ENCODE measurements at regions of chr19 and their contacts with region 1.

Region 1: DNA sequence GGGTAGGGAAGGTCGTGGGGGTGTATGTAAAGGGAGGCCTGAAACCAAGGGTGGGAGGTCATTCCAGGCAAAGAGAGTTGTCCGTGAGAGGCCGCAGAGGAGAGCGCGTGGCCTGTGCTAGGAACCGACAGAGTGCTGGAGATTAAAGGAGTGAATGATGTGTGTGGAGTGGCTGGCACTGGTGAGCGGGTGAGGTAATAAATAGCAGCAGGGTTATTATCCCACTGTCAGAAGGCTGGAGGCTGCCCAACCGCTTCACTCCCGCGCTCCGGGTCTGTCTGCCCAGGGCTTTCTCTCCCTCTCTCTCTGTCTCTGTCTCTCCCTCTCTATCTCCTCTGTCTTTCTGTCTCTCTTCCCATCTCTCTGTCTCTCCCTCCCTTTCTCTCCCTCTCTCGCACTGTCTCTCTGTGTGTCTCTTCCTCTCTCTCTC is 17.4 kb downstream of the ZNF579 start:
- DNase-seq: no peak
- H3K4me3 ChIP-seq: no peak overlapping the region
- H3K27me3 ChIP-seq: peaks cover 6% of the 10 kb centered on the region; the same call in 1 of the 2 replicates
- CTCF ChIP-seq: no peak

Region 2: DNA sequence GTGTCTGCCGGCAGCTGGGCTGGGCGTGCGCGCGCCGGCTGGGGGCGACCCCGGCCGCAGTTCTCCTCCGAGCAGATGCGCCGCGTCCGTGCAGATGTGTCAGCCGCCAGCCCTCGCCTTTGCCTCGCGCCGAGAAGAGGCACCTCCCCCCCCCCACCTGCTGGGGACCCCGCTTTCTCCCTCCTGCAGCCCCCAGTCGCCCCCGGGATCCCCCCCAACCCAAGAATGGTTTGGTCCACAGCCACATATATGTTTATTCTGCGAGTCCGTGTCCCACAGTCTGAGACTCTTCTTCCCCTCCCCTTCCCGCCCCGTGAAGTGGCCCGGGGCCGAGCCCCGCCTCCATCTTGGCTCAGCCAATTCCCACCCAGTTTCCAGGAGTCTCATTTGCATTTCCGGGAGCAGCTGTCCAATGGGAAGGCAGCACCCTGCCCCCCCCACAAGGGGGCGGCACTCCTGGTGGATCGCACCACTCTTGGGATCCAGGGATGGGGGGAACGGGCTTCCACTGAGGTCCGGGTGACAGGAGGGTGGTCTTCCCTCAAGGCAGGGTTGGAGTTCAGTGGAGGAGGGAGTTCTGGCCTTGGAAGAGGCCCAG is 110.4 kb before region 1 on chr19:
- CTCF ChIA-PET with region 1: no interaction called
- POLR2A ChIA-PET with region 1: no interaction called
- DNase-seq: peak; percentile 25
- H3K4me3 ChIP-seq: no peak overlapping the region
- H3K27me3 ChIP-seq: peaks cover 16% of the 10 kb centered on the region
- CTCF ChIP-seq: 0 out of 2 replicates have a peak, but pooled peaks have one; percentile 27

Region 3: DNA sequence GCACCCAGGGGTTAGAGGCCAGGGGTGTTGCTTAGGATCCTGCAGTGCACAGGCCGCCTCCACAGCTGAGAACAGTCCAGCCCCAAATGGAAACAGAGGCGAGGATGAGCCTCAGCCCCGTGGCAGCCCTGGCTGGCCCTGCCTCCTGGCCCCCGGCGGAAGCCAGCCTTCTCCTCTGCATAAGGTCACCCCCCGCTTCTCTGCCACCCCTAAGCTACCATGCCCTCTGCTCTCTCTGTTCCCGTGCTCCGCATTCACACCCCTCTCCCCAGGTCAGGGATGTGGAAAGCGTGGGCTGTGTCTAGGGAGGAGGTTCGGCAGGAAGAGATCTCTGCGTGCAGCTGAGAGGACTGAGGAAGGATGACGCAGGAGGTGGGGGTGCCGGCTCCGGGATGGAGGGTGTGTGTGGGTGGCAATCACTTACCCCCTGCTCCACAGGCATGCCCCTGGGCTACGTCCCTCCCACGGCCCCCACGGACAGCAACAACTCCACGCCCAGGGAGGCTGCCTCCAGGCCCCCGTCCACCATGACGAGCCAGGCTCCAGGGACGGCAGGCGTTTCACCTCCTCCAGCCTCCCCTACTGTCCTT is 69.0 kb before region 1 on chr19:
- CTCF ChIA-PET with region 1: no interaction called
- POLR2A ChIA-PET with region 1: no interaction called
- DNase-seq: no peak
- H3K4me3 ChIP-seq: peak overlapping the region; percentile 39
- H3K27me3 ChIP-seq: no peaks in the 10 kb centered on the region
- CTCF ChIP-seq: no peak

Region 4: DNA sequence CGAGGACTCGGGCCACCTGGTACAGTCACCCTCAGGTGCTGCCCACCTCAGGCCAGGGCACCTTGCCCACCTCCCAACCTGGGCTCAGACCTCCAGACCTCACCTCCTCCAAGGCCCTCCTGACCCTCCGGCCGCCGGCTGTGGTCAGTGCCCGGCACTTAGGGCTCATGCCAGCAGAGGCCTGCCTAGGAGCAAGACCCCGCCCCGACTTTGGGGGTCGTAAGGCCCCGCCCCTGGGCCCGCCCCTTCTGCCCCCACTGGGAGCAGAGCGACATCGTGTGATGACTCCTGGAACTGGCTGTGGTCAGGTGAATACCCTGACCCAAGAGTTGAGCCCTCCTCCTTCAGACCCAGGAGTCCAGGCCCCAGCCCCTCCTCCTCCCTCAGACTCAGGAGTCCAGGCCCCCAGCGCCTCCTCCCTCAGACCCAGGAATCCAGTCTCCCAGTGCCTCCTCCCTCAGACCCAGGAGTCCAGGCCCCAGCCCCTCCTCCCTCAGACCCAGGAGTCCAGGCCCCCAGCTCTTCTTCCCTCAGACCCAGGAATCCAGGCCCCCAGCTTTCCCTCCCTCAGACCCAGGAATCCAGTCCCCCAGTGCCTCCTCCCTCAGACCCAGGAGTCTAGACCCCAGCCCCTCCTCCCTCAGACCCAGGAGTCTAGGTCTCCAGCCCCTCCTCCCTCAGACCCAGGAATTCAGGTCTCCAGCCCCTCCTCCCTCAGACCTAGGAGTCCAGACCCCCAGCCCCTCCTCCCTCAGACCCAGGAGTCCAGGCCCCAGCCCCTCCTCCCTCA is 26.1 kb before region 1 on chr19 and contains the start of gene SBK2:
- CTCF ChIA-PET with region 1: no interaction called
- POLR2A ChIA-PET with region 1: no interaction called
- DNase-seq: no peak
- H3K4me3 ChIP-seq: no peak within 1 kb of the TSS
- H3K27me3 ChIP-seq: no peaks in the 10 kb centered on the region
- CTCF ChIP-seq: peak; percentile 25; the same call in 1 of the 2 replicates
- polyA plus RNA-seq, gene SBK2: 0.07 TPM in 1 of 2 replicates, not detected in the other

Region 5: GRCh38 chr19:55599468-55600279 is 36.4 kb after region 1 on chr19 and contains the start of gene FIZ1:
- CTCF ChIA-PET with region 1: no interaction called
- POLR2A ChIA-PET with region 1: interaction called, 11 read pairs
- DNase-seq: peak; percentile 92
- H3K4me3 ChIP-seq: peak within 1 kb of the TSS; percentile 88
- H3K27me3 ChIP-seq: no peaks in the 10 kb centered on the region
- CTCF ChIP-seq: no peak
- polyA plus RNA-seq, gene FIZ1: 3.7 and 4.0 TPM in 2 replicates